ENCODE measurements at regions of chr3 and their contacts with region 1.

Region 1: DNA sequence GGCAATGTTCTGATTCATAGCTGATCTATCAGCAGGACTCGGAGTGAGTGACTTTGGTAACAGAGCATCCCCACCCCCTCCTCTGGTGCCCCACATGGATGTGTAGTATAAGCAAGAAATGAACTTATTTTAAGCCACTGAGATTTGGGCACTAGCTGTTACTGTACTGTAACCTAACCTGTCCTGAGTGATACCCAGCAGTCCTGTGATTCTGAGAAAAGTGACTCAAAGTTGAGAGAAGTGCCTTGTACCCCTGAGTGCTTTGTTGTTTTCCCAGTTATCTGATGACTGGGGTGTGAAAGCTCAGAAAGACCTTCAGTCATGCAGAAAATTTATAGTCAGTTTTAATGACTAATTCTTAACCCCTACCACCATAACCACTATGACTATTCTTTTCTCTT is 439.9 kb upstream of the RBMS3 start:
- DNase-seq: peak; percentile 40
- ATAC-seq: peak; percentile 94
- H3K4me3 ChIP-seq: no peak overlapping the region
- H3K27ac ChIP-seq: no peak overlapping the region
- H3K4me1 ChIP-seq: peaks cover 4% of the 10 kb centered on the region
- H3K27me3 ChIP-seq: no peaks in the 10 kb centered on the region; a peak in 1 of 4 replicates
- CTCF ChIP-seq: no peak
- EP300 ChIP-seq: 0 out of 4 replicates have a peak, but pooled peaks of 1 of the 2 experiments have one; percentile 30
- POLR2A ChIP-seq: no peak
- RAD21 ChIP-seq: no peak

Region 2: DNA sequence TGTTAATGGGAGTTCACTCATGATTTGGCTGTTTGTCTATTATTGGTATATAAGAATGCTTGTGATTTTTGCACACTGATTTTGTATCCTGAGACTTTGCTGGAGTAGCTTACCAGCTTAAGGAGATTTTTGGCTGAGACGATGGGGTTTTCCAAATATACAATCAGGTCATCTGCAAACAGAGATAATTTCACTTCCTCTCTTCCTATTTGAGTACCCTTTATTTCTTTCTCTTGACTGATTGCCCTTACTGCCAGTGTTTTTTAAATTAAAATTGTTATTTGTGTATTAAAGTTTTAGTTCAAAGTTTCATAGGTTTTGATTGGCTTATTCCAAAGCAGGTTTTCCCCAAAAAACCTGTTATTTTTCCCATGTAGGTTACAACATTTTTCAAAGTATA is 49.4 kb after region 1 on chr3:
- CTCF ChIA-PET with region 1: no interaction called
- POLR2A ChIA-PET with region 1: no interaction called
- RAD21 ChIA-PET with region 1: no interaction called
- SMC1A ChIA-PET with region 1: no interaction called
- in situ Hi-C with region 1: no loop called
- intact Hi-C with region 1: loop called (anchors 1 kb)
- DNase-seq: no peak
- ATAC-seq: no peak
- H3K4me3 ChIP-seq: no peak overlapping the region
- H3K27ac ChIP-seq: no peak overlapping the region
- H3K4me1 ChIP-seq: no peaks in the 10 kb centered on the region
- H3K27me3 ChIP-seq: no peaks in the 10 kb centered on the region
- CTCF ChIP-seq: no peak
- EP300 ChIP-seq: no peak
- POLR2A ChIP-seq: no peak
- RAD21 ChIP-seq: no peak

Region 3: GRCh38 chr3:29011441-29011840 is 170.5 kb after region 1 on chr3:
- CTCF ChIA-PET with region 1: no interaction called
- POLR2A ChIA-PET with region 1: no interaction called
- RAD21 ChIA-PET with region 1: no interaction called
- SMC1A ChIA-PET with region 1: no interaction called
- in situ Hi-C with region 1: no loop called
- intact Hi-C with region 1: no loop called
- DNase-seq: no peak
- ATAC-seq: no peak
- H3K4me3 ChIP-seq: no peak overlapping the region
- H3K27ac ChIP-seq: no peak overlapping the region
- H3K4me1 ChIP-seq: no peaks in the 10 kb centered on the region
- H3K27me3 ChIP-seq: no peaks in the 10 kb centered on the region; a peak in 1 of 4 replicates
- CTCF ChIP-seq: no peak
- EP300 ChIP-seq: no peak
- POLR2A ChIP-seq: no peak
- RAD21 ChIP-seq: no peak

Region 4: GRCh38 chr3:29171043-29171990 is 330.3 kb after region 1 on chr3:
- CTCF ChIA-PET with region 1: no interaction called
- POLR2A ChIA-PET with region 1: no interaction called
- RAD21 ChIA-PET with region 1: no interaction called
- SMC1A ChIA-PET with region 1: no interaction called
- in situ Hi-C with region 1: no loop called
- intact Hi-C with region 1: no loop called
- DNase-seq: no peak
- ATAC-seq: no peak; the same call in 1 of the 3 replicates
- H3K4me3 ChIP-seq: no peak overlapping the region
- H3K27ac ChIP-seq: no peak overlapping the region
- H3K4me1 ChIP-seq: no peaks in the 10 kb centered on the region
- H3K27me3 ChIP-seq: no peaks in the 10 kb centered on the region
- CTCF ChIP-seq: no peak
- EP300 ChIP-seq: no peak
- POLR2A ChIP-seq: no peak
- RAD21 ChIP-seq: no peak

Measured in GM12878 (cell line).